Transverse colon (tissue), 4 donors: ENCODE measurements at regions of chr6 and their contacts with region 1.

Region 1: DNA sequence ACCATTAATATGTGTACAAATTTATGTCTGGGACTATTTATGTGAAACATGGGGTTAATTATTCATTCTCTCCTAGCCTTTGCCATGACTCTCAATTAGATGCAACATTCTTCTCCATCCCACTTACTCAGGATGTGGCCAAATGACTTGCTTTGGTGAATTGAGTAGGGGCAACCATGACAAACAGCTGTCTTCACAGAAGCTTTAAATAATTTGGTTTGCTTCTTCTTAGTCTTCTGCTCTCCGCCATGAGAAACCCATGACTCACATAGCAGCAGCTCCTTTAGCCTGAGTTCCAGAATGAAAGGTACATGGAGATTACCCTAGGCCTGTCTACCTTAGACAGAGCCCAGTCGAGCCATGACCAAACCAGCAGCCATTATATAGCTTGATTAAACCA is 74.7 kb downstream of the FRK start:
- DNase-seq: no peak
- H3K4me3 ChIP-seq: no peak overlapping the region
- H3K27ac ChIP-seq: no peak overlapping the region
- H3K4me1 ChIP-seq: no peaks in the 10 kb centered on the region
- H3K27me3 ChIP-seq: no peaks in the 10 kb centered on the region
- CTCF ChIP-seq: no peak
- EP300 ChIP-seq: no peak
- POLR2A ChIP-seq: no peak

Region 2: DNA sequence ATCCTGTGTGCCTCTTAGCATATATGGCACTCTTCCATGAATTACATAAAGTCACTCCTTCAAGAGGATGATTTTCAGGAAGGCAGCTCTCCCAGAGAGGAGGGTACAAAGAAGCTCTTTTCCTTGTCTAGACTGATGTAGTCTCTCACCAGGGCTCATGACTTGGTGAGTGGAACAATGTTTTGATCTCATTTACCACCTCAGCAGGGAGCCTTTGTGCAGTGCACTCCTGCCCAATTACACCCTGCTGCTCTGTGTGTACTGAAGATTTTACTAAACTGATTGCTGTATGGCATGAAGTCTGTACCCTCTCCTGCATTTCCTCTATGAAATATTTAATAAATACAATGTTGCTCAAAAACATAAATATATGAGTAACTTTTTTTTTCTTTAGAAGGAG is 1044.9 kb before region 1 on chr6:
- in situ Hi-C with region 1: no loop called
- intact Hi-C with region 1: loop called (anchors 5 kb)
- DNase-seq: no peak
- H3K4me3 ChIP-seq: no peak overlapping the region
- H3K27ac ChIP-seq: no peak overlapping the region
- H3K4me1 ChIP-seq: no peaks in the 10 kb centered on the region
- H3K27me3 ChIP-seq: no peaks in the 10 kb centered on the region
- CTCF ChIP-seq: no peak
- EP300 ChIP-seq: no peak
- POLR2A ChIP-seq: no peak

Region 3: GRCh38 chr6:115945306-115945705 is 40.7 kb before region 1 on chr6:
- in situ Hi-C with region 1: no loop called
- intact Hi-C with region 1: no loop called
- DNase-seq: no peak
- H3K4me3 ChIP-seq: no peak overlapping the region
- H3K27ac ChIP-seq: no peak overlapping the region
- H3K4me1 ChIP-seq: no peaks in the 10 kb centered on the region
- H3K27me3 ChIP-seq: no peaks in the 10 kb centered on the region
- CTCF ChIP-seq: no peak
- EP300 ChIP-seq: no peak
- POLR2A ChIP-seq: no peak